Activated naive CD4-positive, alpha-beta T cell treated with anti-CD3 and anti-CD28 coated beads for 36 hours (primary cell): ENCODE measurements at regions of chr5 and their contacts with region 1.

Region 1: GRCh38 chr5:123511648-123512605 is at the start of gene CSNK1G3:
- DNase-seq: peak; percentile 98
- H3K4me3 Mint-ChIP-seq: peak within 1 kb of the TSS; percentile 97
- H3K27ac Mint-ChIP-seq: peak within 1 kb of the TSS; percentile 97
- H3K4me1 Mint-ChIP-seq: peaks cover 40% of the 10 kb centered on the region
- H3K27me3 Mint-ChIP-seq: peaks cover 5% of the 10 kb centered on the region
- total RNA-seq, gene CSNK1G3: 31.9 to 33.8 TPM

Region 2: GRCh38 chr5:122774861-122775549 is 736.9 kb before region 1 on chr5 and contains the start of gene SNX2:
- CTCF ChIA-PET with region 1: no interaction called
- intact Hi-C with region 1: loop called (anchors 5 kb)
- DNase-seq: peak; percentile 89
- H3K4me3 Mint-ChIP-seq: peak within 1 kb of the TSS; percentile 89
- H3K27ac Mint-ChIP-seq: peak within 1 kb of the TSS; percentile 78
- H3K4me1 Mint-ChIP-seq: peaks cover 24% of the 10 kb centered on the region
- H3K27me3 Mint-ChIP-seq: no peaks in the 10 kb centered on the region
- total RNA-seq, gene SNX2: 47.3 to 48.0 TPM

Region 3: GRCh38 chr5:123423278-123424149 is 88.4 kb before region 1 on chr5 and contains the start of gene CEP120:
- CTCF ChIA-PET with region 1: interaction called, 26 read pairs
- intact Hi-C with region 1: loop called (anchors 1 kb)
- DNase-seq: peak; percentile 98
- H3K4me3 Mint-ChIP-seq: no peak within 1 kb of the TSS
- H3K27ac Mint-ChIP-seq: no peak within 1 kb of the TSS
- H3K4me1 Mint-ChIP-seq: peaks cover 21% of the 10 kb centered on the region
- H3K27me3 Mint-ChIP-seq: no peaks in the 10 kb centered on the region
- total RNA-seq, gene CEP120: 39.2 to 39.5 TPM

Region 4: GRCh38 chr5:123450640-123451039 is 61.3 kb before region 1 on chr5:
- CTCF ChIA-PET with region 1: no interaction called
- intact Hi-C with region 1: loop called (anchors 1 kb)
- DNase-seq: no peak
- H3K4me3 Mint-ChIP-seq: no peak overlapping the region
- H3K27ac Mint-ChIP-seq: no peak overlapping the region
- H3K4me1 Mint-ChIP-seq: peaks cover 34% of the 10 kb centered on the region
- H3K27me3 Mint-ChIP-seq: peaks cover 9% of the 10 kb centered on the region

Region 5: GRCh38 chr5:123527190-123527589 is 15.3 kb after region 1 on chr5:
- CTCF ChIA-PET with region 1: interaction called, 4 read pairs
- intact Hi-C with region 1: loop called (anchors 1 kb)
- DNase-seq: no peak
- H3K4me3 Mint-ChIP-seq: no peak overlapping the region
- H3K27ac Mint-ChIP-seq: no peak overlapping the region
- H3K4me1 Mint-ChIP-seq: peaks cover 44% of the 10 kb centered on the region
- H3K27me3 Mint-ChIP-seq: no peaks in the 10 kb centered on the region